ENCODE measurements at regions of chr1 and their contacts with region 1.

Region 1: DNA sequence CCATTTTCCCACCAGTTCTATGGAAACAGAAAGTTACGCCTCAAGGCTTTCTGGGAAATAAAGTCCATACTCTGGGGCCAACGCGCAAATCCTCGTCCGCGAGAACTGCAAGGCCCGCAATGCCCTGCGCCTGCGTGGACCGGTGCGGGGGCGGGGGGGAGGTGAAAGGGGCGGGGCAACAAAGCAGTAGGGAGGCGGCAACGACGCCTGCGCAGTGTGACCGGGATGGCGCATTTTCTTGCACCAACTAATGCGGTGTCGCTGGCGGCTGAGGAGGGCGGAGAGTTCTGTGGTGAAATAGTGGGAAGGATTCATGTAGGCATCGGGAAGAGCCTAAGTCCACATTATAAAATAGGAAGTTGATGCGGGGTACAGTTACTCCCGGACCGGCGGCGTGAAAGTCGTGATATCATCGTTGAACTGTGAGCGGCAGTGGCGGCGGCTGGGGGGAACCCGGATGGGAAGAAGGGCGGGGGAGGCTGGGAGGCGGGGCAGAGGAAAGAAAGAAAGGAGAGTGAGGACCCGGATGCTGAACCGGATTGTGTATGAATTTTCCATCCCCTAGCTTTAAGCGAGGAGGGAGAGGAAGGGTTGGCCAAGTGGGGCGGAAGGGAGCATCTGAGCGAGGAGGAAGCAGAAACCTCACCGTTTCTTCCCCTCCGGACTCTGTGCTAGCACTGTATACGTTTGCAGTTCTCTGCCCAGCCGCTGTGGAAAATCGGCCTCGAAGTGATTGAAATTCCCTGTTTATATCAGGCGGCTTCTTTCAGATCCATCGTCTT is at the start of gene GGPS1:
- H3K4me3 Mint-ChIP-seq: no peak within 1 kb of the TSS
- H3K27ac Mint-ChIP-seq: no peak within 1 kb of the TSS
- H3K4me1 Mint-ChIP-seq: peaks cover 30% of the 10 kb centered on the region
- H3K27me3 Mint-ChIP-seq: no peaks in the 10 kb centered on the region

Region 2: GRCh38 chr1:235253219-235253962 is 75.2 kb before region 1 on chr1:
- intact Hi-C with region 1: loop called (anchors 5 kb)
- H3K4me3 Mint-ChIP-seq: no peak overlapping the region
- H3K27ac Mint-ChIP-seq: no peak overlapping the region
- H3K4me1 Mint-ChIP-seq: no peaks in the 10 kb centered on the region
- H3K27me3 Mint-ChIP-seq: no peaks in the 10 kb centered on the region

Region 3: DNA sequence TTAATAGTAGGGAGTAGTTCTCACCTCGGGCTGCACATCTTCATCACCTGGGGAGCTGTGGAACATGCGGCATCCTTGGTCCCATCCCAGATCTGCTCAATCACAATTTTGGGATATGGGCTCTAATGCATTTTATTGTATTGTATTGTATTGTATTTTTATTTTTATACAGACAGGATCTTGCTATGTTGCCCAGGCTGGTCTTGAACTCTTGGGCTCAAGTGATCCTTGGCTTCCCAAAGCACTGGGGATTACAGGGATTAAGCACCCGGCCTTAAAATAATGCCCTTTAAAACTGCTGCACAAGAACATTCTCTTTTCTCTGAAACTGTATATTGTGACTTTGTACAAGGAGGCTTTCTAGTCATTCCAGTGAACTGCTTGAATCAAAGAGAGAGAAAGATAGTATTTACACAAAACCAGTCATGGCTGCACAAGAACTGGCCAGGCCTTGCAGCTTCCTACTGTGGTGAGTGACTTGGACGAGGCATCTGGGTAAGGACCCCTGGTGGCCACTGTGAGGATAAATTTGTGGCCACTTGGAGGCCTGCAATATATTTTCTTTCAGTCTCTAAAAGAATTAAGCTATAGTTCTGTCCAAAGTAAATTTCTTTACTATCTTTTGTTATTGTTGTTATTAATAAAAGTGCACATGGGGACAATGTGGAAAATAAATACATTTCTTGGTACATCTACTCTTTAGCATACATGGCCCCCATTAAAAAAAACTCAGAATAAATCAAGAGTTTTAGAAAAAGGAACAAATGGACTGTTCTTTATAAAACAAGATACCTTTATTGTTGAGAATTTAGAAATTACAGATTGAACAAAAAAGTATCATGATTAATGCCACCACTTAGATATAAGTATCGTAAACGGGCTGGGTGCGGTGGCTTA is 86.7 kb after region 1 on chr1:
- intact Hi-C with region 1: loop called (anchors 10 kb)
- H3K4me3 Mint-ChIP-seq: no peak overlapping the region
- H3K27ac Mint-ChIP-seq: no peak overlapping the region
- H3K4me1 Mint-ChIP-seq: peaks cover 9% of the 10 kb centered on the region
- H3K27me3 Mint-ChIP-seq: no peaks in the 10 kb centered on the region

Region 4: GRCh38 chr1:235504496-235505222 is 176.1 kb after region 1 on chr1:
- intact Hi-C with region 1: loop called (anchors 2 kb)
- H3K4me3 Mint-ChIP-seq: peak overlapping the region; percentile 95
- H3K27ac Mint-ChIP-seq: peak overlapping the region; percentile 99
- H3K4me1 Mint-ChIP-seq: peaks cover 15% of the 10 kb centered on the region
- H3K27me3 Mint-ChIP-seq: peaks cover 3% of the 10 kb centered on the region

Region 5: GRCh38 chr1:235642011-235642942 is 313.7 kb after region 1 on chr1:
- intact Hi-C with region 1: no loop called
- H3K4me3 Mint-ChIP-seq: peak overlapping the region; percentile 60
- H3K27ac Mint-ChIP-seq: no peak overlapping the region
- H3K4me1 Mint-ChIP-seq: peaks cover 16% of the 10 kb centered on the region
- H3K27me3 Mint-ChIP-seq: peaks cover 58% of the 10 kb centered on the region

Measured in dendritic cell treated with granulocyte-macrophage colony-stimulating factor and Interleukin-4, amounts not matched to agents 40 ng/mL and 50 ng/mL, for 4 days (primary cell).